CD8-positive, alpha-beta memory T cell (primary cell): ENCODE measurements at regions of chr15 and their contacts with region 1.

Region 1: DNA sequence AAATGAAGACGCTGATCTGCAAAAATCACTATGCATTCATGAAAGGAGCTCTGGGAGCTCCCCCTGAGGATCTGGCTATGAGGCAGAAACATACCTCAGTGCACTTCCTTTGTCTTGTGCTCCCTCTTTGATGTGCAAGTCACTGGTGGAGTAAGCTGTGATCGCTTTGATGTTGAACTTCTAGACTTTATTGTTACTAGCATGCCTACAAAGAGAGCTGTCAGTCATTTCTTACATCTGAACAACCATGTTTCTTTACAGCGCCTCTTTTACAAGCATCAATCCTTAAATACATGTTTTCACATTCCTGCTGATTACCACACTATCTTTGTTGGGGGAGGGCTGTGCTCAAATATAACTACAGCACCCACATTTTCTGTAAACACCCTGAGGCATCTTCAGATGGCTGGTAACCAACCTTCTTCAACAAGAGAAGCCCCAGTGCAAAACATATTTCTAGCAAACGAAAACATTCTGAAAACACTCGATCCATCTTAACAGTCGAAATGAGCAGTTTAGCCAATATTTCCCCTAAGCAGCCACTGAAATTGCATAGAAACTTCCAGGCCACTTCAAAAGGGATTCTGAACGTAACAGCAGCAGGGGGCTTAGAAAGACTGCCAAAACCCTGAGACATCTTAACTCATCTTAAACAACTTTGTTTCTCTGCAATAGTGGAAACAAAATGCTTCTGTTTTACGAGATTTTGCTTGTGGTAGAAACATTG is 101.9 kb upstream of the ICE2 start:
- DNase-seq: peak in 4 of 5 donors; percentile 34 to 85 (median 77)
- H3K4me3 ChIP-seq: peak overlapping the region; percentile 36
- H3K4me3 Mint-ChIP-seq: peak overlapping the region; percentile 64 to 81 (median 78)
- H3K27ac ChIP-seq: no peak overlapping the region
- H3K27ac Mint-ChIP-seq: peak overlapping the region; percentile 93 to 99 (median 95)
- H3K4me1 ChIP-seq: peaks cover 91% of the 10 kb centered on the region
- H3K4me1 Mint-ChIP-seq: peaks cover 90 to 95% (median 94%) of the 10 kb centered on the region in 3 donors
- H3K27me3 ChIP-seq: no peaks in the 10 kb centered on the region
- H3K27me3 Mint-ChIP-seq: no peaks in the 10 kb centered on the region

Region 2: DNA sequence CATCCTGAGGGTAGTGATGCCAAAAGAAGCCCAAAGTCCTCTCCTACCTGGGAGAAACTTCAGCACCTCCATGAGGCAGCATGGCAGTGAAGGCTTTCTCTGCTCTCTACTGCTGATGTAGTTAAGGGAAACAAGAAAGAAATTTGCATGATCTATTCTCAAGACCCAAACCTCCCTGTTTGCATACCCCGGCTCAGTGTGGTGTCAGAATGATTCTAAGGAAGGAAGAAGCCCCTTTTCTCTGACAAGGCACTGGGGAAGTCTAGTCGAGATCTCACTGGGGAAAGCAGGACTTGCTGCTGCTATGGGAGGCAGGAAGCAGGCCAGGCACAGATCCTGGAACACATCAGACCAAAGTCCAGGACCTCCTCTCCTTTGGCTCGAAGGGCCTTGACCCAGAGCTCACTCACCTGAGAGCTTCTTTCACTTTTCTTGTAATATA is 12.5 kb before region 1 on chr15:
- CTCF ChIA-PET with region 1: interaction called, 10 read pairs
- POLR2A ChIA-PET with region 1: interaction called, 80 read pairs
- DNase-seq: no peak
- H3K4me3 ChIP-seq: no peak overlapping the region
- H3K4me3 Mint-ChIP-seq: peak overlapping the region; percentile 28 to 88 (median 70)
- H3K27ac ChIP-seq: no peak overlapping the region
- H3K27ac Mint-ChIP-seq: peak overlapping the region; percentile 84 to 99 (median 96)
- H3K4me1 ChIP-seq: peaks cover 91% of the 10 kb centered on the region
- H3K4me1 Mint-ChIP-seq: peaks cover 94 to 97% (median 97%) of the 10 kb centered on the region in 3 donors
- H3K27me3 ChIP-seq: no peaks in the 10 kb centered on the region
- H3K27me3 Mint-ChIP-seq: no peaks in the 10 kb centered on the region

Region 3: GRCh38 chr15:60612400-60613048 is 31.7 kb after region 1 on chr15:
- CTCF ChIA-PET with region 1: no interaction called
- POLR2A ChIA-PET with region 1: no interaction called
- DNase-seq: no peak
- H3K4me3 ChIP-seq: no peak overlapping the region
- H3K4me3 Mint-ChIP-seq: no peak overlapping the region
- H3K27ac ChIP-seq: no peak overlapping the region
- H3K27ac Mint-ChIP-seq: no peak overlapping the region
- H3K4me1 ChIP-seq: no peaks in the 10 kb centered on the region
- H3K4me1 Mint-ChIP-seq: peaks cover 10 to 18% (median 15%) of the 10 kb centered on the region in 3 donors
- H3K27me3 ChIP-seq: no peaks in the 10 kb centered on the region
- H3K27me3 Mint-ChIP-seq: peaks cover 9 to 28% of the 10 kb centered on the region in 2 donors